Thyroid gland (tissue), 4 donors: ENCODE measurements at regions of chr16 and their contacts with region 1.

Region 1: GRCh38 chr16:2926650-2927646 is 15.2 kb downstream of the FLYWCH1 start:
- DNase-seq: peak; percentile 83 to 85
- H3K4me3 ChIP-seq: no peak overlapping the region
- H3K27ac ChIP-seq: no peak overlapping the region
- H3K4me1 ChIP-seq: peaks cover 0 to 5% of the 10 kb centered on the region in 2 donors
- H3K27me3 ChIP-seq: no peaks in the 10 kb centered on the region
- CTCF ChIP-seq: peak; percentile 85 to 96 (median 92)
- POLR2A ChIP-seq: no peak

Region 2: DNA sequence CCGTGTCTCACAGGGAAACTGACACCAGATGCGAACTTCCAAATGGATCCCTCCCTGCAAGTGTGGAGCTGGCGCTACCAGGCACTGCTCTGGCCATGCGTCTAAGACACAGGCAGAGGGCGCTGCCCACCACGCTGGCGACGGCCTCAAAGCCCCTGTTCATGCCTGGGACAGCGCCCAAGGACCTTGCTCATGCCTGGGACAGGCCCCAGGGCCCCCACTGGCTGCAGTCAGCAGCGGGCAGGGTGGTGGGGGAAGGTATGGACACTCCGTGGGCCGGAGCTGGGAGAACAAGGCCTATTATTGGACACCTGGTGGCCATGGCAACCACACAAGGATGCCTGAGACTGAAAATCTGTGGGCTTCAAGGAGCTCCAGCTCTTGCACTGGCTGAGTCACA is 88.0 kb before region 1 on chr16:
- intact Hi-C with region 1: loop called (anchors 2 kb)
- DNase-seq: peak; percentile 67 to 68
- H3K4me3 ChIP-seq: no peak overlapping the region
- H3K27ac ChIP-seq: no peak overlapping the region
- H3K4me1 ChIP-seq: peaks cover 6 to 7% of the 10 kb centered on the region in 2 donors
- H3K27me3 ChIP-seq: no peaks in the 10 kb centered on the region
- CTCF ChIP-seq: peak; percentile 16 to 88 (median 76)
- POLR2A ChIP-seq: no peak

Region 3: GRCh38 chr16:2874912-2875362 is 52.0 kb before region 1 on chr16:
- intact Hi-C with region 1: loop called (anchors 5 kb)
- DNase-seq: peak; percentile 70
- H3K4me3 ChIP-seq: no peak overlapping the region
- H3K27ac ChIP-seq: no peak overlapping the region
- H3K4me1 ChIP-seq: peaks cover 0 to 2% of the 10 kb centered on the region in 2 donors
- H3K27me3 ChIP-seq: no peaks in the 10 kb centered on the region
- CTCF ChIP-seq: peak; percentile 82 to 95 (median 92)
- POLR2A ChIP-seq: no peak